AG04450 (cell line): ENCODE measurements at regions of chr1 and their contacts with region 1.

Region 1: GRCh38 chr1:27300341-27301051 is 21.5 kb upstream of the TMEM222 start:
- DNase-seq: peak; percentile 93
- H3K4me3 ChIP-seq: peak overlapping the region; percentile 29; the same call in 1 of the 2 replicates
- H3K27ac ChIP-seq: peak overlapping the region; percentile 97
- H3K27me3 ChIP-seq: no peaks in the 10 kb centered on the region
- CTCF ChIP-seq: peak; percentile 96

Region 2: DNA sequence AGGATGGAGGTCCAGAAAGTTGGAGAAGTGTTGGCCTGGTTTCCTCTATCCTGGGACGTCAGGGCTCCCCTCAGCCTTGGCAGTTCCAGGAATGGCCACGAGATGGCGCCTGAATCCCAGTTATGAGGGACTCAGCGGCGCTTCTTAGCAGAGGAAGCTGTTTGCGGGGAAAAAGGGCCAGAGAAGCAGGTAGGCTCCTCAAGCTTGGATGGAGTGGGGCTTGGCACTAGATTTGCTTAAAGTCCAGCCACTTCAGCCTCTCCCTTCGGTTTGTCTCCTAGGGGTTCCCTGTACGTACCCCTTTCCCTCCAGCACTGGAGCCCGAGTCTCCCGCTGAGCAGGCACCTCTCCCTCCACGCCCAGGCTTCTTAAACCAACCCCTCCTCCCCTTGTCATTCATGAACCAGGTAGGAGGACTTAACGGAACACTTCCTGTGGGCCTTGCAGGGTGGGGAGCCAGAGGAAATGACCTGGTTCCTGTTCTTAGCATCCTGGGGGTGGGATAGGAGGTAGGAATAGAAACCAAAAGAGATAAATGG is 255.8 kb before region 1 on chr1:
- CTCF ChIA-PET with region 1: interaction called, 26 read pairs
- POLR2A ChIA-PET with region 1: interaction called, 4 read pairs
- DNase-seq: peak; percentile 26
- H3K4me3 ChIP-seq: no peak overlapping the region
- H3K27ac ChIP-seq: no peak overlapping the region
- H3K27me3 ChIP-seq: no peaks in the 10 kb centered on the region
- CTCF ChIP-seq: peak; percentile 98

Region 3: DNA sequence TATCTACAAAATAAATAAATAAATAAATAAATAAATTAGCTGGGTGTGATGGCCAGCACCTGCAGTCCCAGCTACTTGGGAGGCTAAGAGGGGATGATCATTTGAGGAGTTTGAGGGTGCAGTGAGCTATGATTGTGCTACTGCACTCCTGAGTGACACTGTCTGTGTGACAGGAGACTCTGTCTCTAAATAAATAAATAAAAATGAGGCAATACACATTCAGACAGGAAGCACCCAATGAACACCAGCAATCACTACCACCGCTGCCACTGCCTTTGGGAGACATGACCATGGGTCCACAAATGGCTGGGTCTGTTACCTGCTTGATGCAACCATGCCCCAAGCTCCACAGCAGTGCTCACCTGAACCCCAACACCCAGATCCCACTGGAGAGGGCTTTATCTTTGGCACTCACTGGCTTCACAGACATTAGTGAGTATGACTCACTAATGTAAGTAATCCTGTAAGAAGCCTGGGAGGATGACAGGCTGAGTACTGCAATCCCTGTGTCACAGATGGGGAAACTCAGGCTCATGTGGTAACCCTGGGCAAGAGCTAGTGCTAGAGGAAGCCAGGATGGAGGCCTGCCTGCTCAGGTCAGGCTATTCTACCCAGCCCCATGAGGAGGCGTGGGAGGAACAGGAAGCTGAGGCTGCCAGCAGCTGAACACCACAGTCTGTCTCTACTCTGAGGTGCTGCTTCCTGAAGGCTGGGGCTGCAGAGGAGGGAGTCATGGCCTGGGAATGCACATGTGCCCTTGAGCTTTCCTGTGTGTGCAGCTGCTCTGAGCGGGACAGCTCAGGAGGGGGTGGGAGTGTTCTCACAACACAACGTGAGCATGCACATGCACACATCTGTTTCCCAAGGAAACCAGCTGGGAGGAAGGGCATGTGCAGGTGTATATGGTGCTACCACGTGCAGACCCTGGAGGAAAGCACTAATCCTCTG is 188.6 kb before region 1 on chr1:
- CTCF ChIA-PET with region 1: interaction called, 9 read pairs
- POLR2A ChIA-PET with region 1: interaction called, 11 read pairs
- DNase-seq: peak; percentile 99
- H3K4me3 ChIP-seq: no peak overlapping the region
- H3K27ac ChIP-seq: peak overlapping the region; percentile 90
- H3K27me3 ChIP-seq: no peaks in the 10 kb centered on the region
- CTCF ChIP-seq: peak; percentile 38

Region 4: GRCh38 chr1:27284425-27285273 is 15.8 kb before region 1 on chr1:
- CTCF ChIA-PET with region 1: interaction called, 83 read pairs
- POLR2A ChIA-PET with region 1: no interaction called
- DNase-seq: peak; percentile 53
- H3K4me3 ChIP-seq: no peak overlapping the region
- H3K27ac ChIP-seq: no peak overlapping the region
- H3K27me3 ChIP-seq: no peaks in the 10 kb centered on the region
- CTCF ChIP-seq: peak; percentile 82

Region 5: GRCh38 chr1:27357281-27358037 is 57.0 kb after region 1 on chr1:
- CTCF ChIA-PET with region 1: interaction called, 13 read pairs
- POLR2A ChIA-PET with region 1: interaction called, 3 read pairs
- DNase-seq: no peak
- H3K4me3 ChIP-seq: no peak overlapping the region
- H3K27ac ChIP-seq: no peak overlapping the region
- H3K27me3 ChIP-seq: no peaks in the 10 kb centered on the region
- CTCF ChIP-seq: peak; percentile 86

Region 6: GRCh38 chr1:27556781-27557595 is 256.5 kb after region 1 on chr1:
- CTCF ChIA-PET with region 1: interaction called, 11 read pairs
- POLR2A ChIA-PET with region 1: no interaction called
- DNase-seq: peak; percentile 80
- H3K4me3 ChIP-seq: no peak overlapping the region; the same call in 1 of the 2 replicates
- H3K27ac ChIP-seq: peak overlapping the region; percentile 43
- H3K27me3 ChIP-seq: no peaks in the 10 kb centered on the region
- CTCF ChIP-seq: peak; percentile 89